K562 (cell line): ENCODE measurements at regions of chr11 and their contacts with region 1.

Region 1: GRCh38 chr11:61947486-61948210 is 2.5 kb upstream of the BEST1 start:
- DNase-seq: peak; percentile 80 to 86 (median 82)
- ATAC-seq: peak; percentile 67
- H3K4me3 ChIP-seq: no peak overlapping the region
- H3K27ac ChIP-seq: no peak overlapping the region; the same call in 2 of the 3 replicates
- H3K4me1 ChIP-seq: peaks cover 20 to 27% of the 10 kb centered on the region in 2 experiments; a peak in 4 of 5 replicates
- H3K27me3 ChIP-seq: no peaks in the 10 kb centered on the region
- CTCF ChIP-seq: peak; percentile 98 to 99 (median 98)
- EP300 ChIP-seq: no peak
- POLR2A ChIP-seq: no peak
- RAD21 ChIP-seq: peak; percentile 99

Region 2: DNA sequence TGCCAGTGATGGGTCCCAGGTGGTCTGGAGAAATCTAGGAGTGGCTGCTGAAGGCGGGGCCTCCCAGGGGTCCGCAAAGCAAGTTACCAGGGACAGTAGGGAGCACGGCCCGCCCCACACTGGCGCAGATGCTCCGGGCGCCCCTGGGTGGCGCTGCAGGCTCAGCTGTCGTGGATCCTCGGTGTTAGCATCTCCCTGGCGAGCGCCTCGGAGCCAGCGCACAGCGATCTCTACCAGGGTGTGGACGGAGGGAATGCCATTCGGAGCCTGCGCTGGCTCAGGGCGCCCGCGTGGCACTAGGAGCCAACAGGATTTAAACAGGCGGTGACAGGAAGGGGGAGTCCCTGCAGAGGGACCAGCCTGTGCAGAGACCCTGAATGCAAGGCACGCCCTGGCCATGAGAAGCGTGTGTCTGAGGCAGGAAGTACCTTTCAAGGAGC is 76.5 kb before region 1 on chr11:
- CTCF ChIA-PET with region 1: interaction called, 7 read pairs
- POLR2A ChIA-PET with region 1: interaction called, 11 read pairs
- in situ Hi-C with region 1: no loop called
- intact Hi-C with region 1: loop called (anchors 1 kb)
- DNase-seq: peak; percentile 88 to 93 (median 90)
- ATAC-seq: peak; percentile 94
- H3K4me3 ChIP-seq: no peak overlapping the region
- H3K27ac ChIP-seq: peak overlapping the region; percentile 85
- H3K4me1 ChIP-seq: peaks cover 43 to 76% of the 10 kb centered on the region in 2 experiments
- H3K27me3 ChIP-seq: no peaks in the 10 kb centered on the region
- CTCF ChIP-seq: peak; percentile 91 to 97 (median 96)
- EP300 ChIP-seq: no peak
- POLR2A ChIP-seq: no peak
- RAD21 ChIP-seq: peak; percentile 93 to 96

Region 3: GRCh38 chr11:61899146-61899841 is 48.4 kb before region 1 on chr11:
- CTCF ChIA-PET with region 1: interaction called, 98 read pairs
- POLR2A ChIA-PET with region 1: interaction called, 25 read pairs
- in situ Hi-C with region 1: loop called (anchors 5 kb)
- intact Hi-C with region 1: loop called (anchors 1 kb)
- DNase-seq: peak; percentile 89 to 94 (median 94)
- ATAC-seq: peak; percentile 93
- H3K4me3 ChIP-seq: no peak overlapping the region
- H3K27ac ChIP-seq: no peak overlapping the region
- H3K4me1 ChIP-seq: peaks cover 4 to 34% of the 10 kb centered on the region in 2 experiments; a peak in 4 of 5 replicates
- H3K27me3 ChIP-seq: no peaks in the 10 kb centered on the region
- CTCF ChIP-seq: peak; percentile 99
- EP300 ChIP-seq: no peak
- POLR2A ChIP-seq: no peak
- RAD21 ChIP-seq: peak; percentile 97 to 99

Region 4: DNA sequence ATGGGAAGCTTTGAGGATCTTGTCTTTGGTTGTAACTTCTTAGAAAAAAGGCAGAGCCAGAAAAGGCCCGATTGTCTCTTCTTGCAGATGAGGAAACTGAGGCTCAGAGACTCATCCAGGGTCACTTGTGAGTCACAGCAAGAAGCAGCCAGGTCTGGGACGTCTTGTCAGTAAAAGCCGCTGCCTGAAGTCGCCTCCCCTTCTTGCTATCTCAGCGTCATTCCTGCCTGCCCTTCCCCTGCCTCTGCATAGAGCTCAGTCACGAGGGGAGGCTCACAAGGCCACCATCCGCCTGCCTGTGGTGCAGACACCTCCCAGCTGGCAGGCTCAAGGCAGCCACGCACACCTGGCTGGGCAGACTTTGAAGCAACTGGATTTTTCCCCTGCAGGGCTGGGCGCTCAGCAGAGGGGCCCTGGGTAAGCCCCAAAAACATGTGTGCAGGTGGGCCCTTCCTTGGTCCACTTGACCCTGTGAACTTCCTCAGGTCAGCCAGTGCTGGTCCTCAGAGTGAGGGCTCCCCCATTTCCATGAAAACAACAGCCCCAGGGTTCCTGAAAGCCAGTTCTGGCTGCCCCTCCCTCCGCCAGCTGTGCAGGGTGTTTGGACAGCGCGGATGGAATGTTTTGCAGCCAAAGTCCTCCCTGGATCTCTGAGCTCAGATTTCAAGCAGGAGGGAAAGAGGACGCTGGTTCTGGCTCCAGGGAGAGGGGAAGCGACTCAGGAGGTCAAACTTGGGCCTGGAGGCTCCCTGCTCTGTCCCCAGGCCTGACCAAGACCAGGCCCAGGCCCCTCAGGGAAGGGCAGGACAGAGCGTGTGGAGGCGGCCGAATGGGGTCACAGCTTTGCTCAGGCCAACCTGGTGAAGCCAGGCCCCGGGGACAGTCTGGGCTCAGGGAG is 24.2 kb before region 1 on chr11:
- CTCF ChIA-PET with region 1: no interaction called
- POLR2A ChIA-PET with region 1: interaction called, 17 read pairs
- in situ Hi-C with region 1: no loop called
- intact Hi-C with region 1: no loop called
- DNase-seq: peak; percentile 56 to 88 (median 65)
- ATAC-seq: peak; percentile 63
- H3K4me3 ChIP-seq: no peak overlapping the region
- H3K27ac ChIP-seq: peak overlapping the region; percentile 7; the same call in 1 of the 3 replicates
- H3K4me1 ChIP-seq: peaks cover 41 to 59% of the 10 kb centered on the region in 2 experiments
- H3K27me3 ChIP-seq: no peaks in the 10 kb centered on the region
- CTCF ChIP-seq: no peak
- EP300 ChIP-seq: no peak
- POLR2A ChIP-seq: no peak
- RAD21 ChIP-seq: no peak

Region 5: GRCh38 chr11:61985885-61986345 is 38.3 kb after region 1 on chr11:
- CTCF ChIA-PET with region 1: no interaction called
- POLR2A ChIA-PET with region 1: no interaction called
- in situ Hi-C with region 1: no loop called
- intact Hi-C with region 1: no loop called
- DNase-seq: no peak
- ATAC-seq: no peak
- H3K4me3 ChIP-seq: no peak overlapping the region
- H3K27ac ChIP-seq: no peak overlapping the region
- H3K4me1 ChIP-seq: peaks cover 0 to 2% of the 10 kb centered on the region in 2 experiments; a peak in 2 of 5 replicates
- H3K27me3 ChIP-seq: no peaks in the 10 kb centered on the region
- CTCF ChIP-seq: no peak
- EP300 ChIP-seq: no peak
- POLR2A ChIP-seq: no peak
- RAD21 ChIP-seq: no peak

Region 6: DNA sequence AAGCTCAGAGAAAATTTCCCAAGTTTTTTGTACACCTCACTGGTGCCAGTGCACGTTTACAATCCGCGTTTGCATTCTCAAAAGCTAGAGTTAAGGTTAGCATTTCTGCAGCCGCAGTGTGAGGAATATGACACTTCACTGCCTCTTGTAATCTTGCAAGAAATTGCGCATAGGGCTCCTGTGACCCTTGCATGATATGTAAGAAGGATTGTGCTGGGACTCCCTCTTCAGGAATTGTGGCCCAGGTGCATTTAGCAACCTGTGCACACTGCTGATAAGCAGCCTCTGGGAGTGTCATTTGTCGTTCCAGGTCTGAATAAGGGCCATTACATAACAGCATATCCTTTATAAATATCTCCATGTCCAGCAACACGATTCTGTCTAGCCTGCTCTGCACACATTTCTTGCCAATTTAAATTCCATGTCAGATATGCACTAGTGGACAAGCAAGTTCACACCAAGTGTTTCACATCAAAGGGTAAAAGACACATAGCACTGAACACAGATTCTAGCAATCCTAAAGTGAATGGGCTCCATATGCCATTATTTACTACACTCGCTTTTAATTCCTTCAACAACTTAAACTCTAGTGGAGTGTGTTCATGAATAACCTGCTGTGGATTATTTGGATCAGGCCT is 107.0 kb after region 1 on chr11:
- CTCF ChIA-PET with region 1: no interaction called
- POLR2A ChIA-PET with region 1: interaction called, 3 read pairs
- in situ Hi-C with region 1: no loop called
- intact Hi-C with region 1: loop called (anchors 1 kb)
- DNase-seq: peak in 2 of 4 experiments; percentile 58 to 81
- ATAC-seq: peak; percentile 87
- H3K4me3 ChIP-seq: no peak overlapping the region
- H3K27ac ChIP-seq: no peak overlapping the region
- H3K4me1 ChIP-seq: peaks cover 0 to 9% of the 10 kb centered on the region in 2 experiments; a peak in 2 of 5 replicates
- H3K27me3 ChIP-seq: no peaks in the 10 kb centered on the region
- CTCF ChIP-seq: peak; percentile 70 to 93 (median 73)
- EP300 ChIP-seq: peak; percentile 62
- POLR2A ChIP-seq: no peak
- RAD21 ChIP-seq: peak; percentile 91 to 96

Region 7: GRCh38 chr11:62081378-62082291 is 134.0 kb after region 1 on chr11:
- CTCF ChIA-PET with region 1: no interaction called
- POLR2A ChIA-PET with region 1: interaction called, 8 read pairs
- in situ Hi-C with region 1: no loop called
- intact Hi-C with region 1: loop called (anchors 1 kb)
- DNase-seq: peak; percentile 75 to 78 (median 76)
- ATAC-seq: peak; percentile 91
- H3K4me3 ChIP-seq: no peak overlapping the region
- H3K27ac ChIP-seq: no peak overlapping the region
- H3K4me1 ChIP-seq: peaks cover 0 to 5% of the 10 kb centered on the region in 2 experiments; a peak in 3 of 5 replicates
- H3K27me3 ChIP-seq: no peaks in the 10 kb centered on the region
- CTCF ChIP-seq: peak; percentile 90 to 97 (median 96)
- EP300 ChIP-seq: no peak
- POLR2A ChIP-seq: no peak
- RAD21 ChIP-seq: peak; percentile 98

Region 8: DNA sequence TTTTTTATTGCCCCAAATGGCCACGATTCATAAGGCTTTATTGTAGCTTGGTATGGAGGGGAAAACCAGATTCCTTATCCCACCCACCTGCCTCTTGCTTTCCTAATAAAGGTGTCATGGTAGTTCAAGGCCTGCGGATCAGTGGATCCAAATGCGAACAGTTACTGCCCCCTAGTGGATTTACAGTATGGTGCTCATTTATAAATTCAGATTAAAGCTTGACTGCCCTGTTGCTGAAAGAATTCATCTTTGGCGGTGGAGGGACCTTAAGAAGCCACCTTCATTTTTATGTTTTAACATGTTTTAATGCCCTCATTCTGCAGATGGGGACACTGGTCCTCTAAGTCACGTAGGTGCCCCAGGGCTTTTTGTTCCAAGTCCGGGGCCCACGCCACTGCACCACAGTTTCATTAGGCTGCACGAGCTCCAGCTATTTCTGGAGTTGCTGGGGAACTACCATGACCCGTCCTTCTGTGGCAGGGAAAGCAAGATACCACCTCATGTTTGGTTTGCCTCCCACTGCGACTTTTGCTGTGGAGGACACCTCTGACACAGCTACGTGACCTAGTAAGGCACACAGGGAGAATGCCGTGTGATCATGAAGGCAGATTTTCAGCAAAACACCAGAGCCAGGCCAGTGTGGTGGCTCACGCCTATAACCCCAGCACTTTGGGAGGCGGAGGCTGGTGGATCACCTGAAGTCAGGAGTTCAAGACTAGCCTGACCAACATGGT is 160.5 kb after region 1 on chr11:
- CTCF ChIA-PET with region 1: no interaction called
- POLR2A ChIA-PET with region 1: interaction called, 6 read pairs
- in situ Hi-C with region 1: no loop called
- intact Hi-C with region 1: loop called (anchors 2 kb)
- DNase-seq: peak; percentile 44 to 80 (median 48)
- ATAC-seq: peak; percentile 74
- H3K4me3 ChIP-seq: no peak overlapping the region
- H3K27ac ChIP-seq: no peak overlapping the region
- H3K4me1 ChIP-seq: peaks cover 7 to 16% of the 10 kb centered on the region in 2 experiments
- H3K27me3 ChIP-seq: no peaks in the 10 kb centered on the region
- CTCF ChIP-seq: peak; percentile 74 to 92 (median 79)
- EP300 ChIP-seq: no peak
- POLR2A ChIP-seq: no peak
- RAD21 ChIP-seq: peak; percentile 92